GM23248 (cell line): ENCODE measurements at regions of chr20 and their contacts with region 1.

Region 1: GRCh38 chr20:54062812-54063280 is 7.5 kb downstream of the BCAS1 start:
- DNase-seq: peak; percentile 75
- H3K4me3 ChIP-seq: no peak overlapping the region
- H3K27ac ChIP-seq: no peak overlapping the region
- H3K4me1 ChIP-seq: peaks cover 36% of the 10 kb centered on the region
- H3K27me3 ChIP-seq: no peaks in the 10 kb centered on the region

Region 2: DNA sequence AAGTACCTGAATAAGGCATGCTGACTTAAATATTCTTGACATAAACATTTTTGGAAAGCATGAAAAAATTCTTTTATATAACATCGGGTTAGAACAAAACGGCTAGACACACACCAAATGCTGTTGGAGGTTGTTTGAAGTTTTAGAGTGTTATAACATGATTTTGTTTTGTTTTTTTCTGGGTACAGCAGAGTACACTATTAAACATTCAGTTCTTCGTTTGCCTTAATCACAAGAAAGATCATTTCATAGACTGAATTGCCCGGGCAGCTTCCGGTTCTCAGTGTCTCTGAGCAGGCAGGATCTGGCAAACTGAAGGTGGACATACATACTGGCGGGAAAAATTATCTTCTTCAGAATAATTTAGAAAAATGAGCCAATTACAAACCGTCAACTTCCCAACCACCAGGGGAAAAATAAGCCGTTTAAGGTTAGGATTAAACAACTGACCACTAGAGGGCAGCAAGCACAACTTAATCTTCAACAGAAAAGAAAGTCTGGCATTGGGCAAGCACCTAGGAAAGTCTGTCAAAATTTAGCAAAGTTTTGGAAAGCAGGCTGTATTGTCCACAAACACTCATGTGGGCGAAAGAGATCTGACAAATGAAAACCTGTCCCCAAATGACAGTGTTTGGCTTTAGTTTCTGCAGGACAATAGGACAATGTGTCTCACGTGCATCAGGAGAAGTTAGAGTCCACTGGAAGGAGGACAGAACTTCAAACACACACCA is 484.2 kb before region 1 on chr20:
- in situ Hi-C with region 1: loop called (anchors 10 kb)
- DNase-seq: peak; percentile 93
- H3K4me3 ChIP-seq: peak overlapping the region; percentile 61
- H3K27ac ChIP-seq: peak overlapping the region; percentile 95
- H3K4me1 ChIP-seq: peaks cover 57% of the 10 kb centered on the region
- H3K27me3 ChIP-seq: no peaks in the 10 kb centered on the region

Region 3: DNA sequence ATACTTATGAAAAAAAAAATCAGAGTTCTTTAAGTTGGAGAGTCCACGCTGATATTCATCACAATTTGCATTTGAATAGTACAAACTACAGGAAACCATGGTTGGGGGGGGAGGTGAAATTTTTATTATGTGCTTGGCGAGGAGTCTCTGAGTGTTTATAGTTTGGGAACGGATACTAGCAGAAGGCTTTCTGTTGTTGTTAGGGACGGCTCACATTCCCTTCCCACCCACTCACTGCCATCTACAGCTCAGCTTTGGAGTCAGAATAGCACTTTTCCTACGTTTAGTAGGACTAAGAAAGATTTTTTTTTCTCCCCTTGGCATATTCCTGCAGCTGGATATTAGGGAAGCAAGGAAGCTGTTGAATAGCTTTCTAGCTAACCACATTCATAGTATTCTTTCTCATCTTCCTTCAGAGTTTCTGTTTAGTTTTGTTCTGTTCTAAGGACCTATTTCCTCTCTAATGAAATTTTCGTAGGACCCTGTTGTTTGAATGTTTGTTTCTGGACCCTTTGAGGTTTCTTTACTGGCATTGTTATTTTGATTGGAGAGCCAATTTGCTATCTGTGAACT is 234.1 kb before region 1 on chr20:
- in situ Hi-C with region 1: loop called (anchors 10 kb)
- DNase-seq: peak; percentile 94
- H3K4me3 ChIP-seq: peak overlapping the region; percentile 72
- H3K27ac ChIP-seq: peak overlapping the region; percentile 100
- H3K4me1 ChIP-seq: peaks cover 40% of the 10 kb centered on the region
- H3K27me3 ChIP-seq: no peaks in the 10 kb centered on the region

Region 4: GRCh38 chr20:53939572-53940359 is 123.1 kb before region 1 on chr20:
- in situ Hi-C with region 1: loop called (anchors 5 kb)
- DNase-seq: peak; percentile 97
- H3K4me3 ChIP-seq: 0 out of 2 replicates have a peak overlapping the region, but pooled peaks have one; percentile 26
- H3K27ac ChIP-seq: peak overlapping the region; percentile 99
- H3K4me1 ChIP-seq: peaks cover 51% of the 10 kb centered on the region
- H3K27me3 ChIP-seq: no peaks in the 10 kb centered on the region